Activated CD8-positive, alpha-beta memory T cell treated with anti-CD3 and anti-CD28 coated beads, Interleukin-2, amount 10 ng/mL, durations not matched to agents 7 days and 5 days (primary cell): ENCODE measurements at regions of chr4 and their contacts with region 1.

Region 1: GRCh38 chr4:8176547-8177399 is 18.2 kb upstream of the ABLIM2 start:
- DNase-seq: peak; percentile 53
- ATAC-seq: peak; percentile 87
- H3K4me3 Mint-ChIP-seq: no peak overlapping the region
- H3K27ac Mint-ChIP-seq: no peak overlapping the region
- H3K4me1 Mint-ChIP-seq: no peaks in the 10 kb centered on the region
- H3K27me3 Mint-ChIP-seq: no peaks in the 10 kb centered on the region

Region 2: DNA sequence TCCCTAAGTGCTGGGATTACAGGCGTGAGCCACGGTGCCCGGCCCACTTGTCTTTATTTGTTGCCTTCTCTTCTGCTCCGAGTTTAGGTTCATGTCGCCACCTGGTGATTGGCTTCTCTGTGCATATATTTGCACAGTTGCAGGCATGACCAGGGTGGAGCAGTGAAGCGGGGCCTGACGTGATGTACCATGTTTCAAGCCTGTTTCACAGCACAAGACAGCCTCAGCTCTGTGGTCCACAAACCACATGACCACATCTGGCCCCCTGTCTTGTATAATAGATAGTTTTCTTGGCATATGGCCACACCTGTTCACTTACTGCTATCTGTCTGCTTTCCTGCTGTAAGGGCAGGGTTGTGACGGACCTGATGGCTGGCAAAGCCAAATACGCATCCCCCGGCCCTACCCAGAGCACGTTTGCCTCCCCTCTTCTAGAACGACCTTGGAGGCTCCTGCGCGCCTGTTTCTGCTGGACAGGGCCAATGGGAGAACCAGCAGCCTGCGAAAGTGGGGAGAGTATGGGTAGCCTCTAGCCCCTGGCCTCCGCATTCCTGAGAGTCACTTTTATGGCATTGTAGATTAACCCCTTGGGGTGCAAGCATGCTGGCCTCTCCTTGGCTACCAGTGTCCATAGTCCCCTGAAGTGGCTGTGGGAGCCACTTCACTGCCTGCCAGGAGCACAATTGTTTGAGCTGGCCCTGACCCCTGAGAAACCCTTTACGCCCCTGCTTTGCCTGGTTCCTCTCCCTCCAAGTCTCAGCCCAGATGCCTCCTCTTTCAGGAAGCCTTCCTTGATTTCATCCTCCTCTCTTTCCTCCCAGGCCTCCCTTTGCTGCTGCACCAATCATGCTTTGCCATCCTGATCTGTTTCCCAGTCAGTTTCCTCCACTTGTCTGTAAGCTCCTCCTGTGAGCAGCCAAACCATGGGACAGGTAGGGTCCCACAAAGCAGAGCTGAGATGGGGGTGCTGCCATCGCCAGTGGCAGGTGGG is 16.3 kb after region 1 on chr4:
- CTCF ChIA-PET with region 1: interaction called, 20 read pairs
- DNase-seq: peak; percentile 58
- ATAC-seq: peak; percentile 63
- H3K4me3 Mint-ChIP-seq: no peak overlapping the region
- H3K27ac Mint-ChIP-seq: no peak overlapping the region
- H3K4me1 Mint-ChIP-seq: peaks cover 8% of the 10 kb centered on the region
- H3K27me3 Mint-ChIP-seq: peaks cover 9% of the 10 kb centered on the region

Region 3: GRCh38 chr4:8198906-8199593 is 22.3 kb after region 1 on chr4 and contains the start of gene SH3TC1:
- CTCF ChIA-PET with region 1: interaction called, 20 read pairs
- DNase-seq: peak; percentile 81
- ATAC-seq: peak; percentile 98
- H3K4me3 Mint-ChIP-seq: peak within 1 kb of the TSS; percentile 75
- H3K27ac Mint-ChIP-seq: peak within 1 kb of the TSS; percentile 84
- H3K4me1 Mint-ChIP-seq: peaks cover 31% of the 10 kb centered on the region
- H3K27me3 Mint-ChIP-seq: peaks cover 5% of the 10 kb centered on the region
- total RNA-seq, gene SH3TC1: 6.0 to 10.7 TPM

Region 4: GRCh38 chr4:8241895-8242696 is 65.3 kb after region 1 on chr4:
- CTCF ChIA-PET with region 1: interaction called, 14 read pairs
- DNase-seq: peak; percentile 78
- ATAC-seq: peak; percentile 89
- H3K4me3 Mint-ChIP-seq: no peak overlapping the region
- H3K27ac Mint-ChIP-seq: no peak overlapping the region
- H3K4me1 Mint-ChIP-seq: peaks cover 1% of the 10 kb centered on the region
- H3K27me3 Mint-ChIP-seq: no peaks in the 10 kb centered on the region

Region 5: GRCh38 chr4:8403173-8403753 is 226.5 kb after region 1 on chr4:
- CTCF ChIA-PET with region 1: interaction called, 16 read pairs
- DNase-seq: peak; percentile 46
- ATAC-seq: peak; percentile 57
- H3K4me3 Mint-ChIP-seq: no peak overlapping the region
- H3K27ac Mint-ChIP-seq: no peak overlapping the region
- H3K4me1 Mint-ChIP-seq: no peaks in the 10 kb centered on the region
- H3K27me3 Mint-ChIP-seq: no peaks in the 10 kb centered on the region